Activated naive CD4-positive, alpha-beta T cell treated with anti-CD3 and anti-CD28 coated beads, Interleukin-2, amount 10 ng/mL, durations not matched to agents 7 days and 5 days (primary cell): ENCODE measurements at regions of chr2 and their contacts with region 1.

Region 1: GRCh38 chr2:189674374-189675112 is at the start of gene ANKAR:
- DNase-seq: peak; percentile 79
- H3K4me3 Mint-ChIP-seq: peak within 1 kb of the TSS; percentile 85
- H3K27ac Mint-ChIP-seq: peak within 1 kb of the TSS; percentile 94
- H3K4me1 Mint-ChIP-seq: peaks cover 28% of the 10 kb centered on the region
- H3K27me3 Mint-ChIP-seq: no peaks in the 10 kb centered on the region

Region 2: DNA sequence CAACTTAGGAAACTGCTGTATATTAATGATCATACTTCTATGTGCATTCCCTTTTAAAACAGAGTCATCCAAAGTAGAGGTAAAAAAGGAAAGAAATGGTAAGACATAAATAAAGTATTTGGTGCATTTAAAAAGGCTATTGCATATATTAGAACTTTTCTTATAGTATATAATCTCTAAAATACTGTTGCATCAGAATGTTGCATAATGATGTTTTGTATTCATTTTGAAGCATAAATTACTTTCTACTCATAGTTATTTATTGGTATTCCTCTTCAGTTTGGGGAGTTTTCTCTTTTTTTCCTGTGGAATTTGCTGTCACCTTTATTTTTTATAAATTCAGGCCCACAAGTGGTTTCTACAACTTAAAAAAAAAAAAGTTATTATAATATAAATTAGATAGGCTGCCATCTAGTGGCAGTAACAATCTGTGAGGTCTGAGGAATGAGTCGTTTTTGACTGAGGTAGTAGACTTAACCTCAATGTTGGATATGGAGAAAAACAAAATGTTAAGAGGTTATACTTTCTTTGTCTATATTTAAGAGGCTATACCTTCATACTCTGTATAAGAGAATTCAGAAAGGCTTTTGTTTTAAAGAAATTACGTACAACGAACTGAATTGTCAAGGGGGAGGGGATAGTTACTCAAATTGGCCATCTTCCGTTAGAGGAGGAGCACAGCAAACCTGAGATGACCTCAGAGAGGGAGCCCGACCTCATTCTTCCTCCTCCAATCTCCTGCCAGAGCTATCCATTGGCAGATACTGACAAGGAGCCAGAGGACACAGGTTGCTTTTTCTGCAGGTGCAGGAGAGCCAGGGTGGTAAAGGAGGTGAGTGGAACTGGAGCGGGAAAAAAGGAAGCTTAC is 23.7 kb after region 1 on chr2:
- CTCF ChIA-PET with region 1: interaction called, 11 read pairs
- DNase-seq: peak; percentile 54
- H3K4me3 Mint-ChIP-seq: peak overlapping the region; percentile 21
- H3K27ac Mint-ChIP-seq: peak overlapping the region; percentile 64
- H3K4me1 Mint-ChIP-seq: peaks cover 2% of the 10 kb centered on the region
- H3K27me3 Mint-ChIP-seq: no peaks in the 10 kb centered on the region